Dorsolateral prefrontal cortex (tissue), 120 donors: ENCODE measurements at regions of chr11 and their contacts with region 1.

Region 1: GRCh38 chr11:62726915-62727763 is at the start of gene HNRNPUL2:
- DNase-seq: peak; percentile 95 to 98 (median 96)
- H3K4me3 ChIP-seq: peak within 1 kb of the TSS; percentile 64 to 99 (median 91)
- H3K27ac ChIP-seq: peak within 1 kb of the TSS; percentile 85 to 99 (median 98)
- H3K27me3 ChIP-seq: no peaks in the 10 kb centered on the region
- CTCF ChIP-seq: peak in 32 of 56 donors; percentile 3 to 52 (median 26)
- total RNA-seq, gene HNRNPUL2: 49.2 to 100 (median 74.3) TPM

Region 2: GRCh38 chr11:62705880-62706849 is 21.0 kb before region 1 on chr11:
- intact Hi-C with region 1: loop called (anchors 1 to 2 kb)
- DNase-seq: peak; percentile 91 to 98 (median 96)
- H3K4me3 ChIP-seq: peak overlapping the region; percentile 54 to 99 (median 82)
- H3K27ac ChIP-seq: peak overlapping the region; percentile 72 to 100 (median 96)
- H3K27me3 ChIP-seq: no peaks in the 10 kb centered on the region
- CTCF ChIP-seq: peak in 15 of 56 donors; percentile 3 to 32 (median 22)

Region 3: DNA sequence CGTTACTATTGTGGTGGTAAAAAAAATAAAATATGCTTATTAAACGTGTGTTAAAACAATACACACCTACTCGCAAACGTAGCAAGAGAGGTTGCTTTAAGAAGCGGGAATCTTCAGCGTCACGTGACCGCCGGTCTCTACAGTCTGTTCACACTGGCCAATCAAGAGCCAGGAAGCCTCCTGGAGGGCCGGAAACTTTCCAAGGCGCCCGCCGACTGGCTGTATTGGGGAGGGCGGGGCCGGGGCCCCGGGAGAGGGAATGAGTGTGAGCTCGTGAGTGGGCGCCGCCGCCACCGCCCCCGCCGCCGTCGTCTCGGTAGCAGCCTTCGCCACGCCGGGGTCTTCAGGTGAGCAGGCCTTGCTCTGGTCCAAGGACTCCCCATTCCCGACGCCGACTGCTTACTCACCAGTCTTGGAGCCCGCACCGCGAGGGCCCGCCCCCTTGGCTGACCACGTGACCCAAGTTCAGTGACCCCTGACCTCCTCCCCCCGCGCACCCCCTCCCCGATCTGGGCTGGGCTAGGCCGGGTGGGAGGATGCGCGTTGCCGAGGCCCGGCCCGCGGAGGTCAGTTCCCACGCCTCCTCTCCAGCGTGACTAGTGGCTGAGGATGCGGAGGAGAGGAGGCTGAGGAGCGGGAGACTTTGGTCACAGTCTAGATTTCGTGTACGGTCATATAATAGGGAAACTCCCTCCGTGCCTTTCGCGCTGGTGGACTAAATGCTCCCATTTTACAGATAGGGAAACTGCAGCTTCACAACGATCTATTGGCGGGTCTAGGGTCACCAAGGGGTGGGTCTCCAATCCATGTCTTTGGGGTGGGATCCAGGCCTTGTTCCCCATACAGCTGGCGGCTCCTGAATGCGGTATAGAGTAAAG is 44.2 kb after region 1 on chr11 and contains the start of gene TAF6L:
- intact Hi-C with region 1: loop called (anchors 5 kb)
- DNase-seq: peak; percentile 97 to 100 (median 98)
- H3K4me3 ChIP-seq: peak within 1 kb of the TSS; percentile 61 to 100 (median 82)
- H3K27ac ChIP-seq: peak within 1 kb of the TSS; percentile 86 to 99 (median 97)
- H3K27me3 ChIP-seq: no peaks in the 10 kb centered on the region
- CTCF ChIP-seq: peak in 16 of 56 donors; percentile 2 to 41 (median 20)
- total RNA-seq, gene TAF6L: 9.3 to 39.3 (median 22.8) TPM

Region 4: DNA sequence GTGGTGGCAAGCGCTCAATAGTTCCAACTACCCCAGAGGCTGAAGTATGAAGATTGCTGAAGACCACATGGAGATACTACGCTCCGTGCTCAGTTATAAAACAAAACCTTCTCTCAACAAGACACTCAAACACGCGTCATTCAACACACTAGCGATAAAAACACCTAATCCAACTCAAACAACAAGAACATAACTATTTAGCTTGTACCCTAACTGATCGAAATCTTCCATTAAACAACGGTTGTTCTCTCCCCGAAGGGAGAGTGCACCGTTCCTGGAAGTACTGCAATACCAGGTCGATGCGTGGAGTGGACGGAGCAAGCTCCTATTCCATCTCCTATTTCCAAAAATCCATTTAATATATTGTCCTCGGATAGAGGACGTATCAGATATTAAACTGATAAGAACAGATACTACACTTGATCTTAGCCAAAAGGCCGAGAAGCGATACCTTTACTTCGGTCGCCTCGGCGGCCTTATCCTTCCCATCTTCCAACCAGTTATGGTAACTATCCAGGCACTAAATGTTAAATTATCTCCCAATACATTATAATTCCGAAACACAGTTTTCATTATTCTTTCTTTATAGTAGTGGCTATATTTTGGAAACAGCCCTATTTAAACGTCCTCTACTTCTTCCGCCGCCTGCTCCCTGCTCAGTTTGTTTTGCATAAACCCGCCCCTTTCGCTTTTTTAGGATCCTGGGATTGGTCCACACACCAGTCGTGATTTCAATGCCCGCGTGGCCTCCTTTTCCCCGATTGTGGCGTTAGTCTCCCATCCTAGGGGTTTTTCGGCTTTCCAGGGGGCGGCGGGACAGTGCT is 114.4 kb after region 1 on chr11:
- intact Hi-C with region 1: loop called in 1 of 2 experiments (anchors 5 kb)
- DNase-seq: peak; percentile 62 to 90 (median 86)
- H3K4me3 ChIP-seq: peak overlapping the region; percentile 65 to 100 (median 95)
- H3K27ac ChIP-seq: peak overlapping the region; percentile 88 to 100 (median 99)
- H3K27me3 ChIP-seq: no peaks in the 10 kb centered on the region
- CTCF ChIP-seq: peak in 4 of 56 donors; percentile 4 to 28 (median 18)

Region 5: DNA sequence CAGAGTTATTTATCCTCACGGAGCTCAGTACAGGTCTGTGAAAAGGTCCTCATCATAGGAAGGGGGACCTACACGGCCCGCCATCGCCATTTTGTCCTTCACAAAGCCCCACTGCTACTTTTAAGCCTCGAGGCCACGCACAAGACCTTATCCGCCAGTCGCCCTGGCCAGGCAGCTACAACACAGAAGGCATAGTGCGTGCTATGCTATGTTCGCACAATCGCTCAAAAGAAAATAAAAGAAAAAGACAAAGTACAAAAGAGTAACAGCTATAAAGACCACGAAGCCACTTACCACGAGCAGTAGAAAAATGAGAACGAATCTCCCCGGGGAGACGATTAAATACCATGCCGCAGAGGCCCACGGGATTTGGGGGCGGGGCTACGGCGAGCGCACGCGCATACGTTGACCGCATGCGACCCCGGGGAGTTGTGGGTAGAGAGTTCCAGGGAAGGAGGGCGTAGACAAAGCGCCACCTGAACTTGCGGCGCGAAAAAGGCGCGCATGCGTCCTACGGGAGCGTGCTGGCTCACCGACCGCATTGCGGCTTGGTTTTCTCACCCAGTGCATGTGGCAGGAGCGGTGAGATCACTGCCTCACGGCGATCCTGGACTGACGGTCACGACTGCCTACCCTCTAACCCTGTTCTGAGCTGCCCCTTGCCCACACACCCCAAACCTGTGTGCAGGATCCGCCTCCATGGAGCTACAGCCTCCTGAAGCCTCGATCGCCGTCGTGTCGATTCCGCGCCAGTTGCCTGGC is 128.6 kb after region 1 on chr11:
- intact Hi-C with region 1: loop called (anchors 5 to 10 kb)
- DNase-seq: peak; percentile 91 to 97 (median 94)
- H3K4me3 ChIP-seq: peak overlapping the region; percentile 64 to 100 (median 90)
- H3K27ac ChIP-seq: peak overlapping the region; percentile 31 to 94 (median 82)
- H3K27me3 ChIP-seq: no peaks in the 10 kb centered on the region
- CTCF ChIP-seq: peak in 47 of 56 donors; percentile 15 to 65 (median 40)